Activated CD4-positive, alpha-beta memory T cell treated with anti-CD3 and anti-CD28 coated beads for 36 hours (primary cell): ENCODE measurements at regions of chr17 and their contacts with region 1.

Region 1: GRCh38 chr17:75904749-75905521 is at the start of gene MRPL38:
- DNase-seq: peak; percentile 97
- H3K4me3 Mint-ChIP-seq: peak within 1 kb of the TSS; percentile 99
- H3K27ac Mint-ChIP-seq: peak within 1 kb of the TSS; percentile 90
- H3K4me1 Mint-ChIP-seq: peaks cover 17% of the 10 kb centered on the region
- H3K27me3 Mint-ChIP-seq: no peaks in the 10 kb centered on the region
- total RNA-seq, gene MRPL38: 108 TPM

Region 2: DNA sequence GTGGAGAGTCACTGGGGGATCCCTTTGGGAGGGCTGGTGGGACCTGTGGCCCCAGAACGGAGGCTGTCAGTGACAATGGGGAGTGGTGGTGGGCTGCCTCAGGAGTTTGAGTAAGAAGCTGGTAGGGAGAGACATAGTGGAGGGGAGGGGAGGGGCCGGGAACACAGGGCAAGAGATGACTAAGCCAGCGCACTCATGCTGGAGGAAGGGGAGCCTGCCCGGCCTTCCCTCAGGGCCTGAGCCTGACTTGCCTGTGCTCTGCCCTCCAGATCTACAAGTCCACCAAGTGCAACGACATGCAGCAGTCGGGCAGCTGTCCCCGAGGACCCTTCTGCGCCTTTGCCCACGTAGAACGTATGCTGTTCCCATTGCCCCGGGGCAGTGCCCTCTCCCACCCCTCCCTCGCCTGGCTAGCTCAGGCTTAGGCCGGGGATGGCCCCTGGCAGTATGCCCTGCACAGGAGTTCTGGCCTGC is 90.0 kb before region 1 on chr17:
- CTCF ChIA-PET with region 1: no interaction called
- POLR2A ChIA-PET with region 1: no interaction called
- intact Hi-C with region 1: no loop called
- DNase-seq: no peak
- H3K4me3 Mint-ChIP-seq: no peak overlapping the region
- H3K27ac Mint-ChIP-seq: no peak overlapping the region
- H3K4me1 Mint-ChIP-seq: peaks cover 2% of the 10 kb centered on the region
- H3K27me3 Mint-ChIP-seq: no peaks in the 10 kb centered on the region

Region 3: GRCh38 chr17:75940724-75941441 is 35.9 kb after region 1 on chr17 and contains the start of gene FBF1:
- CTCF ChIA-PET with region 1: interaction called, 5 read pairs
- POLR2A ChIA-PET with region 1: no interaction called
- intact Hi-C with region 1: loop called (anchors 2 kb)
- DNase-seq: peak; percentile 93
- H3K4me3 Mint-ChIP-seq: peak within 1 kb of the TSS; percentile 94
- H3K27ac Mint-ChIP-seq: peak within 1 kb of the TSS; percentile 75
- H3K4me1 Mint-ChIP-seq: peaks cover 14% of the 10 kb centered on the region
- H3K27me3 Mint-ChIP-seq: no peaks in the 10 kb centered on the region
- total RNA-seq, gene FBF1: 17.2 to 18.1 TPM

Region 4: DNA sequence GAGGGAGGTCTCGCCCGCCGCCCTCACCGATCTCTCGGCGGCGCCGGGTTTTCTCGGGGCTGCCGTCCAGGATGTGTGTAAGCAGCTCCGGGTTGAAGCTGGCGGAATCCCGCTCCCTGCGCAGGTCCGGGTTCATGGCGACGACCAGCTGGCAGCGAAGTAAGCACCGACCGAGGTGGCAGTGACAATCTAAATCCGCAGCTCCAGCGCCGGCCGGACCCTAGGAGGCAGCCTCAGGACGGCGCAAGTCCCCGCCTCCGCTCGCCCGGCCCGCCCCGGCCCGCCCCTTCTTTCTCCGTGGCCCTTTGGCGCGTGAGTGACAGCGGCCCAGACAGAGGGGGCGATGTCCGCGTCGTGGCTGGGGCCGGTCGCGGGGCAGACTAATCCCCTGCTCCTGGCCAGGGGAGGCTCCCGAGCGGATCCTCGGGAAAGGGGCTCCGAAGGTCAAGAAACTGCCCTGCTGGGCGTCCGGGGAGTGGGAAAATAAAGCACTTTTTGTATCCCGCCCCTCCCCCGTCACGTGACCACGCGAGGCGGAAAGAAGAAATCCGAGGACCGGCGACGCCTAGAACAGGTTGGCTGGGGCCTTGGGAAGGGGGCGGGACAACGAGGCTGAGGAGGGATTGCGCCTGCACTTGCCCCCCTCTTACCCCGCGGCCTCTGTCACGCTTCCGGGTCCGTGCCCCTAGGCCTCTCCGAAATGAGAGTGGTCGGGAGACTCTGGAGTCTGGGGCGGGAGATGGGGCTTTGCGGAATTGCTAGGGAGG is 74.2 kb after region 1 on chr17 and contains the starts of genes ACOX1 and TEN1:
- CTCF ChIA-PET with region 1: interaction called, 7 read pairs
- POLR2A ChIA-PET with region 1: no interaction called
- intact Hi-C with region 1: loop called (anchors 1 kb)
- DNase-seq: peak; percentile 97
- H3K4me3 Mint-ChIP-seq: peak within 1 kb of the TSS; percentile 96
- H3K27ac Mint-ChIP-seq: peak within 1 kb of the TSS; percentile 99
- H3K4me1 Mint-ChIP-seq: peaks cover 33% of the 10 kb centered on the region
- H3K27me3 Mint-ChIP-seq: no peaks in the 10 kb centered on the region
- total RNA-seq, gene ACOX1: 34.0 to 35.1 TPM
- total RNA-seq, gene TEN1: 11.4 to 12.3 TPM

Region 5: GRCh38 chr17:76000016-76000754 is 95.2 kb after region 1 on chr17:
- CTCF ChIA-PET with region 1: interaction called, 24 read pairs
- POLR2A ChIA-PET with region 1: interaction called, 3 read pairs
- intact Hi-C with region 1: loop called (anchors 1 kb)
- DNase-seq: peak; percentile 76
- H3K4me3 Mint-ChIP-seq: no peak overlapping the region
- H3K27ac Mint-ChIP-seq: no peak overlapping the region
- H3K4me1 Mint-ChIP-seq: peaks cover 16% of the 10 kb centered on the region
- H3K27me3 Mint-ChIP-seq: no peaks in the 10 kb centered on the region

Region 6: DNA sequence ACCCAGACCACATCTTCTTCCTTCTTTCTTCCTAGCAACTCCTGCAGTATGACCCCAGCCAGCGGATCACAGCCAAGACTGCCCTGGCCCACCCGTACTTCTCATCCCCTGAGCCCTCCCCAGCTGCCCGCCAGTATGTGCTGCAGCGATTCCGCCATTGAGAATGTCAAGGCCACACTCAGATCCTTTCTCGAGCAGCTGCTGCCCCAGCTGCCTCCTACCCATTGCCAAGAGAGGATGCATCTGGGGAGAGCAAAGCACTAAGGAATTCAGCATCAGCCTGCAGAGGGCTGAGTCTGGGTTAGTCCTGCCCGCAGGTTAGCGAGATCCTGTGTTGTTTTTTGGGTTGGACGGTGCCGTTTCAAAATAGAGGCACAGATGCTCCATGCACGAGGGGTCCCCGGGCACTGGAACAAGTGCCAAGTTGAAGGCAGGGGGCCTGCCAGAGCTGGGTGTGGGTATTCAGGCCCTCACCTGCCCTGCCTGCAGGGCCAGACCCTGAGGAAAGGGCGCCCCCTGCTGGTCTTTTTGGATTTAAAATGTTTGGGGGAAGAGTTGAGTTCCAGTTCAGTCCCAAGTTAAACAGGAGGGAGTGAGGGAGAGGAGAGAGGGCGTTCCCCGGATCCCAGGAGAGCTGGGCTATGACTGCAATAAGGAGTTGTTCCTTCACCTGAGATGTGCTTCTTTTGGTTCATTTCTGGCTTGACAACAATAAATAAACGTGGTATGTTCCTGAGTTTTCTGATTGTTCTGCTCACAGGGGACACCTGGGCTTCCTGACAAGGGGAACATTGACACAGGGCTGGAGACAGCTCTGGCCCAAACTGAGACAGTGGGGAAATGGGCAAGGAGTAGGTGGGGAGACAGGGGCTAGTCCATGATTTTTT is 100.6 kb after region 1 on chr17:
- CTCF ChIA-PET with region 1: interaction called, 24 read pairs
- POLR2A ChIA-PET with region 1: interaction called, 3 read pairs
- intact Hi-C with region 1: loop called (anchors 1 kb)
- DNase-seq: peak; percentile 87
- H3K4me3 Mint-ChIP-seq: no peak overlapping the region
- H3K27ac Mint-ChIP-seq: no peak overlapping the region
- H3K4me1 Mint-ChIP-seq: no peaks in the 10 kb centered on the region
- H3K27me3 Mint-ChIP-seq: no peaks in the 10 kb centered on the region